ENCODE measurements at regions of chr21 and their contacts with region 1.

Region 1: GRCh38 chr21:42878993-42879787 is at the start of gene WDR4:
- H3K4me3 ChIP-seq: peak within 1 kb of the TSS; percentile 87
- H3K27ac ChIP-seq: peak within 1 kb of the TSS; percentile 69
- H3K4me1 ChIP-seq: no peaks in the 10 kb centered on the region
- CTCF ChIP-seq: no peak; the same call in 1 of the 2 replicates

Region 2: DNA sequence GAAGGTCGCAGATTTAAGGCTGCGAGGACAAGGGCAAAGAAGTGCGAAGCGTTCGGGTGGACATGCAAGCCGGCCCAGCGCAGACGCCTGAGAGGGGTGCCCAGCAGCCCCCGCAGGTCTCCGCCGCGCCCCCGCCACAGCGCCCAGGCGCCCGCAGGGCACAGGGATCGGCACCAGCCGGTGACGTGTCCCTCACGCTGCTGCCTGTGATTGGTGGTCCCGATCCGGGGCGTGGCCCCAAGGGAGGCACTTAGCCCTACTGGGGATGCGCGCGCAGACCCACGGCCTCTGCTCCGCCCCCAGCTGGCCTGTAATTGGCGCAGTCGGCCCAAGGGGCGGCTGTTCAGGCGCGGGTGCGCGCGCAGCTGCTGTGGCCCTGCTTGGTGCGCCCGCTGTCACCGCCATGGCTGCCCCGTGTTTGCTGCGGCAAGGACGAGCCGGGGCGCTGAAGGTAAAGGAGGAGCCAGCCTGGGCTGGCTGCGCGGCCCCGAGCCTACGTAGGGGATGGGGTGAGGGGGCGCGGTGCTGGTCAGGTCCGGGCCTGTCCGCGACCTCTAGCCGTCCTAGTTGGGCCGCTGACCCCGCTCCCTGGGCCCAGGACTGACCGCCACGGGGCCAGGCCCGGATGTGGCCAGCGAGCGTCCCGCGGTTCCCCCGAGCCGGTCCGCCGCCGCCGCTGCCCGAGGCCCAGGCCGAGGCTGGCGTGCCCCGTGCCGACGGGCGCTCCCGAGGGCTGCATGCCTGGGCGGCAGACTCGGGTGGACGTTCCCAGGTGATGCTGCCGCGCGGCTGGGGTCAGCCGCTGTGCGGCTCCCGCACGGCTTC is 14.0 kb after region 1 on chr21 and contains the start of gene NDUFV3:
- CTCF ChIA-PET with region 1: interaction called, 5 read pairs
- POLR2A ChIA-PET with region 1: interaction called, 23 read pairs
- H3K4me3 ChIP-seq: peak within 1 kb of the TSS; percentile 72
- H3K27ac ChIP-seq: peak within 1 kb of the TSS; percentile 88
- H3K4me1 ChIP-seq: peaks cover 3% of the 10 kb centered on the region; the same call in 1 of the 2 replicates
- CTCF ChIP-seq: peak; percentile 52